ENCODE measurements at regions of chr15 and their contacts with region 1.

Region 1: DNA sequence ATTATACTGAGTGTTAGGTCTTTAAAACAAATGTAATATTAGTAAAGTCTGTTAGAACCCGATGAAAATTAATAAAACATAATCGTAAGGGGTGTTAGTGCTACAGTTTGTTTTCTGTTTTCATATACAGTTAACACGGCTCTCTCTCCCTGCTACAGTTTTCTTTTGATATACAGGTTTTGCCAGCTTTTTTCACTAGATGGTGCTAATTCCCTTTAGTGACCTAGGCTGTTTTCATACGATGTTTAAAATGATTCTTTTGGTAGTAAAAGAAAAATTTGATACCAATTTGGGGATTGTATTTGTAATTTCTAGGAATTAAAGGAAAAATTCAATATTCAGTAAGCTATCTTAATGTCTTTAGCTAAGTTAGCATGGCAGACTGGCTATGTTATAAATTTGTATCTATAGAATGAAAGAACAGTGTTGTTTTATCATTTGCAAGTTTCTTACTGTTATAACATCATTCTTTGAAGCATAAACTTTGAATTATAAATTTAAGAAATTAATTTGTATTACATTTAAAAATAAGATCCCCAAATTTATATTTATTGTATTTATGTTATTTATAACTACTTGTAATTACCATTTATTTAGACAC is 11.5 kb downstream of the APH1B start:
- DNase-seq: no peak
- ATAC-seq: peak; percentile 82
- H3K4me3 ChIP-seq: no peak overlapping the region
- H3K27ac ChIP-seq: no peak overlapping the region
- H3K4me1 ChIP-seq: no peaks in the 10 kb centered on the region
- H3K27me3 ChIP-seq: no peaks in the 10 kb centered on the region
- CTCF ChIP-seq: peak; percentile 54 to 71 (median 60)
- EP300 ChIP-seq: no peak
- POLR2A ChIP-seq: no peak
- RAD21 ChIP-seq: peak; percentile 87

Region 2: GRCh38 chr15:63048115-63048775 is 240.6 kb before region 1 on chr15:
- CTCF ChIA-PET with region 1: interaction called, 19 read pairs
- POLR2A ChIA-PET with region 1: interaction called, 3 read pairs
- RAD21 ChIA-PET with region 1: interaction called, 6 read pairs
- SMC1A ChIA-PET with region 1: interaction called, 4 read pairs
- in situ Hi-C with region 1: no loop called
- intact Hi-C with region 1: no loop called
- DNase-seq: peak; percentile 28
- ATAC-seq: peak; percentile 94
- H3K4me3 ChIP-seq: peak overlapping the region; percentile 75
- H3K27ac ChIP-seq: no peak overlapping the region
- H3K4me1 ChIP-seq: peaks cover 6% of the 10 kb centered on the region; the same call in 1 of the 2 replicates
- H3K27me3 ChIP-seq: peaks cover 9 to 25% of the 10 kb centered on the region in 2 experiments
- CTCF ChIP-seq: peak; percentile 86 to 98 (median 91)
- EP300 ChIP-seq: no peak
- POLR2A ChIP-seq: peak; percentile 34; the same call in 1 of the 2 replicates
- RAD21 ChIP-seq: peak; percentile 64

Region 3: GRCh38 chr15:63256433-63257274 is 32.2 kb before region 1 on chr15:
- CTCF ChIA-PET with region 1: no interaction called
- POLR2A ChIA-PET with region 1: no interaction called
- RAD21 ChIA-PET with region 1: no interaction called
- SMC1A ChIA-PET with region 1: no interaction called
- in situ Hi-C with region 1: no loop called
- intact Hi-C with region 1: no loop called
- DNase-seq: no peak
- ATAC-seq: no peak
- H3K4me3 ChIP-seq: no peak overlapping the region
- H3K27ac ChIP-seq: no peak overlapping the region
- H3K4me1 ChIP-seq: no peaks in the 10 kb centered on the region
- H3K27me3 ChIP-seq: no peaks in the 10 kb centered on the region
- CTCF ChIP-seq: no peak
- EP300 ChIP-seq: no peak
- POLR2A ChIP-seq: no peak
- RAD21 ChIP-seq: no peak

Region 4: GRCh38 chr15:63277038-63277892 is 11.6 kb before region 1 on chr15 and contains the start of gene APH1B:
- CTCF ChIA-PET with region 1: interaction called, 17 read pairs
- POLR2A ChIA-PET with region 1: interaction called, 3 read pairs
- RAD21 ChIA-PET with region 1: interaction called, 7 read pairs
- SMC1A ChIA-PET with region 1: interaction called, 13 read pairs
- in situ Hi-C with region 1: no loop called
- intact Hi-C with region 1: no loop called
- DNase-seq: no peak
- ATAC-seq: peak; percentile 94
- H3K4me3 ChIP-seq: peak within 1 kb of the TSS; percentile 94
- H3K27ac ChIP-seq: peak within 1 kb of the TSS; percentile 62
- H3K4me1 ChIP-seq: peaks cover 4% of the 10 kb centered on the region; the same call in 1 of the 2 replicates
- H3K27me3 ChIP-seq: no peaks in the 10 kb centered on the region
- CTCF ChIP-seq: no peak
- EP300 ChIP-seq: no peak
- POLR2A ChIP-seq: peak; percentile 89
- RAD21 ChIP-seq: no peak
- polyA plus RNA-seq, gene APH1B: 12.9 to 17.6 TPM

Region 5: DNA sequence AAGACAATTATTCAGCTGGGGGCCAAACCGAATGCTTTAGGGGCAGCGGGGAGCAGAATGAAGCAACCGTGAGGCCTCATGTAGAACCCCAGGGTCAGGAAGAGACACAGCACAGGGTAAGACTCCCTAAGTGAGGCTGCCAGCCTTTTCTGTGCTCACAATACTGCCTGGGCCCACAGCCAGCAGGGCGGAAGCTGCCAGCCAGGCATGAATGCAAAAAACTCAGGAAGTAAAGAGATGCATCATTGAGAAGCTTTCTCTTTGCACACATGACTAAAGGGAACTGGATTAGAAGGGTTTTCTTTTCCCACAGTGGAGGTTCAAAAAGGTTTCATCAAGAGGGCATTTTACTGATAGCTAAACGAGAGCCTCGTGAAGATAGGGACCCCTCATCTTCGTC is 59.5 kb after region 1 on chr15:
- CTCF ChIA-PET with region 1: interaction called, 3 read pairs
- POLR2A ChIA-PET with region 1: no interaction called
- RAD21 ChIA-PET with region 1: interaction called, 14 read pairs
- SMC1A ChIA-PET with region 1: interaction called, 8 read pairs
- in situ Hi-C with region 1: no loop called
- intact Hi-C with region 1: no loop called
- DNase-seq: no peak
- ATAC-seq: no peak
- H3K4me3 ChIP-seq: no peak overlapping the region
- H3K27ac ChIP-seq: no peak overlapping the region
- H3K4me1 ChIP-seq: no peaks in the 10 kb centered on the region
- H3K27me3 ChIP-seq: no peaks in the 10 kb centered on the region; a peak in 1 of 4 replicates
- CTCF ChIP-seq: no peak
- EP300 ChIP-seq: no peak
- POLR2A ChIP-seq: no peak
- RAD21 ChIP-seq: no peak

Region 6: GRCh38 chr15:63402498-63403253 is 113.8 kb after region 1 on chr15:
- CTCF ChIA-PET with region 1: interaction called, 145 read pairs
- POLR2A ChIA-PET with region 1: interaction called, 3 read pairs
- RAD21 ChIA-PET with region 1: interaction called, 62 read pairs
- SMC1A ChIA-PET with region 1: interaction called, 92 read pairs
- in situ Hi-C with region 1: loop called (anchors 5 kb)
- intact Hi-C with region 1: loop called (anchors 1 kb)
- DNase-seq: no peak
- ATAC-seq: peak; percentile 73
- H3K4me3 ChIP-seq: no peak overlapping the region
- H3K27ac ChIP-seq: no peak overlapping the region
- H3K4me1 ChIP-seq: no peaks in the 10 kb centered on the region
- H3K27me3 ChIP-seq: no peaks in the 10 kb centered on the region
- CTCF ChIP-seq: peak; percentile 44 to 60 (median 56); a peak in 5 of 6 replicates
- EP300 ChIP-seq: no peak
- POLR2A ChIP-seq: no peak
- RAD21 ChIP-seq: peak; percentile 82

Region 7: GRCh38 chr15:63514531-63514943 is 225.7 kb after region 1 on chr15:
- CTCF ChIA-PET with region 1: no interaction called
- POLR2A ChIA-PET with region 1: no interaction called
- RAD21 ChIA-PET with region 1: no interaction called
- SMC1A ChIA-PET with region 1: no interaction called
- in situ Hi-C with region 1: no loop called
- intact Hi-C with region 1: no loop called
- DNase-seq: no peak
- ATAC-seq: 0 out of 3 replicates have a peak, but pooled peaks have one; percentile 12
- H3K4me3 ChIP-seq: 0 out of 2 replicates have a peak overlapping the region, but pooled peaks have one; percentile 21
- H3K27ac ChIP-seq: peak overlapping the region; percentile 67; the same call in 1 of the 2 replicates
- H3K4me1 ChIP-seq: peaks cover 45% of the 10 kb centered on the region
- H3K27me3 ChIP-seq: no peaks in the 10 kb centered on the region
- CTCF ChIP-seq: no peak
- EP300 ChIP-seq: no peak
- POLR2A ChIP-seq: no peak
- RAD21 ChIP-seq: no peak

Region 8: DNA sequence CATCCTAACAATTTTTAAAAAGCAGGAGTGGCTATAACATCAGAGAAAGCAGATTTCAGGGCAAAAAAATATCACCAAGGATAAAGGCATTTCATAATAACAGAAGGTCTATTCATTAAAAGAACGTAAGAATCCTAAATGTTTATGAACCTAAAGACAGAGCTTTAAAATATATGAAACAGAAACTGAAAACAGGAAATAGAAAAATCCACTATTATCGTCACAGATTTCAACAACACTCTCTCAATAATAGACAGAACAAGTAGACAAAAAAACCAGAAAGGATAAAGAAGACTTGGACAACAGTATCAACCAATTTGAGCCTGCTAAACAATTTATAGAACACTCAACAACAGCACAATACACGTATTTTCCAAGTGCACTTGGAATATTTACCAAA is 379.7 kb after region 1 on chr15:
- CTCF ChIA-PET with region 1: no interaction called
- POLR2A ChIA-PET with region 1: no interaction called
- RAD21 ChIA-PET with region 1: no interaction called
- SMC1A ChIA-PET with region 1: no interaction called
- in situ Hi-C with region 1: no loop called
- intact Hi-C with region 1: no loop called
- DNase-seq: no peak
- ATAC-seq: peak; percentile 87
- H3K4me3 ChIP-seq: peak overlapping the region; percentile 26
- H3K27ac ChIP-seq: peak overlapping the region; percentile 79
- H3K4me1 ChIP-seq: peaks cover 11% of the 10 kb centered on the region
- H3K27me3 ChIP-seq: no peaks in the 10 kb centered on the region
- CTCF ChIP-seq: no peak
- EP300 ChIP-seq: no peak
- POLR2A ChIP-seq: no peak
- RAD21 ChIP-seq: no peak

Measured in GM12878 (cell line).